PC-9 (cell line): ENCODE measurements at regions of chr10 and their contacts with region 1.

Region 1: GRCh38 chr10:6528198-6528950 is 51.7 kb downstream of the PRKCQ start:
- DNase-seq: no peak
- H3K4me3 ChIP-seq: no peak overlapping the region
- H3K27ac ChIP-seq: no peak overlapping the region
- H3K4me1 ChIP-seq: no peaks in the 10 kb centered on the region
- H3K27me3 ChIP-seq: no peaks in the 10 kb centered on the region
- CTCF ChIP-seq: no peak

Region 2: DNA sequence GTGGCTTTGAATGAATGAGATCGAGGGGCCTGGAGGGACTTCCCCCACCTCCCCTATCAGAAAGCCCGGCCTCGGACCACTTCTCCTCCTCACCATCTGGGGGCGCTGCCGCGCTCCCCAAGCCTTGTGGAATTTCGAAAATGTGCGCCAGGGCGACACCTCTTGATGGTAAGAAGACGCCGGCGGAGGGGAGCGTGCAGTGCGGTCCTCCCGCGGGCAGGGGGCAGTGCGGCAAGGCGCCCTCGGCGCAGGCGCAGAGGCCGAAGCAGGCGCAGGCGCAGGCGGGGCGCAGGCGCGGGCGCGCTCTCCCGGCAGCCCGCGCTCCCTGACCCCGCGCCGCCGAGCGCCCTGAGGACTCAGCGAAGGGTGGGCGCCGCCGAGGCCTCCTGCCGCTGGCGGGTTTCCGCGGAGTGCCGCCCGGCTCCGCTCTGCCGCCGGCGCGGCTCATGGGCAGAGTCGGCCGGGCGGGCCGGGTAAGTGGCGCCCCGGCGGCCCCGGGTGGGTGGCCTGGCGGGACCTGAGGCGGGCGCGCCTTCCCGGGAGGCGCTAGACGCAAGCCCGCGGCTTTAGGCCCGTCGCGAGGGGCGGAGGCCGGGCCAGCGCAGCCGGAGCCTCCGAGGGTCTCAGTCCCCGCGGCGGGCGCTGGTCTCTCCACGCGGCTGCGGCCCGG is 439.5 kb before region 1 on chr10 and contains the start of gene RBM17:
- CTCF ChIA-PET with region 1: no interaction called
- POLR2A ChIA-PET with region 1: no interaction called
- intact Hi-C with region 1: no loop called
- DNase-seq: peak; percentile 69 to 97
- H3K4me3 ChIP-seq: peak within 1 kb of the TSS; percentile 71
- H3K27ac ChIP-seq: 0 out of 2 replicates have a peak within 1 kb of the TSS, but pooled peaks have one; percentile 19
- H3K4me1 ChIP-seq: peaks cover 16% of the 10 kb centered on the region
- H3K27me3 ChIP-seq: peaks cover 3% of the 10 kb centered on the region; the same call in 1 of the 2 replicates
- CTCF ChIP-seq: peak; percentile 97
- total RNA-seq, gene RBM17: 98.2 and 131 TPM in 2 replicates

Region 3: GRCh38 chr10:6158276-6158675 is 370.1 kb before region 1 on chr10:
- CTCF ChIA-PET with region 1: no interaction called
- POLR2A ChIA-PET with region 1: no interaction called
- intact Hi-C with region 1: no loop called
- DNase-seq: no peak
- H3K4me3 ChIP-seq: no peak overlapping the region
- H3K27ac ChIP-seq: no peak overlapping the region
- H3K4me1 ChIP-seq: no peaks in the 10 kb centered on the region
- H3K27me3 ChIP-seq: no peaks in the 10 kb centered on the region
- CTCF ChIP-seq: no peak

Region 4: DNA sequence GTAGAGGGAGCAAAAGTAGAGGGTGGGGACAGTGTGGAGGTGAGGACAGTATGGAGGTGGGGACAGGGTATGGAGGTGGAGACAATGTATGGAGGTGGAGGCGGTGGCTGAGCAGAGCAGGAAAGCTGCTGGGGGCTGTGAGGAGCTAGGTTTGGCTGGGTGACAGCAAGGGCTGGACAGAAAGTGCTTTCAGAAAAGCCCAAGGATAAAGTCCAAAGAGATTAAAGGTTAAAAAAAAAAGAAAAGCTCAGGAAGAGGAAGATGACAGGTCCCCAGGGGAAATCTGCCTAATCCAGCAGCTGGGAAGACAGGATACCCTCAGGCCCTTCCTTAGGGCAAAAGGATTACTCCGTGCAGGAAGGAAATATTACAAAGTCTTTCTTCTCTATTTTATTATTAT is 357.7 kb before region 1 on chr10:
- CTCF ChIA-PET with region 1: no interaction called
- POLR2A ChIA-PET with region 1: interaction called, 12 read pairs
- intact Hi-C with region 1: no loop called
- DNase-seq: no peak
- H3K4me3 ChIP-seq: no peak overlapping the region
- H3K27ac ChIP-seq: no peak overlapping the region
- H3K4me1 ChIP-seq: no peaks in the 10 kb centered on the region
- H3K27me3 ChIP-seq: no peaks in the 10 kb centered on the region
- CTCF ChIP-seq: no peak